Activated CD4-positive, alpha-beta T cell treated with anti-CD3 and anti-CD28 coated beads for 36 hours (primary cell): ENCODE measurements at regions of chr11 and their contacts with region 1.

Region 1: GRCh38 chr11:61091373-61092279 is 10.7 kb upstream of the CD5 start:
- DNase-seq: peak; percentile 84
- ATAC-seq: peak; percentile 71
- H3K4me3 Mint-ChIP-seq: peak overlapping the region; percentile 91
- H3K27ac Mint-ChIP-seq: peak overlapping the region; percentile 98
- H3K4me1 Mint-ChIP-seq: peaks cover 63% of the 10 kb centered on the region
- H3K27me3 Mint-ChIP-seq: no peaks in the 10 kb centered on the region

Region 2: GRCh38 chr11:61054927-61055562 is 36.6 kb before region 1 on chr11:
- CTCF ChIA-PET with region 1: interaction called, 3 read pairs
- POLR2A ChIA-PET with region 1: interaction called, 16 read pairs
- intact Hi-C with region 1: no loop called
- DNase-seq: peak; percentile 79
- ATAC-seq: peak; percentile 77
- H3K4me3 Mint-ChIP-seq: peak overlapping the region; percentile 42
- H3K27ac Mint-ChIP-seq: peak overlapping the region; percentile 92
- H3K4me1 Mint-ChIP-seq: peaks cover 87% of the 10 kb centered on the region
- H3K27me3 Mint-ChIP-seq: no peaks in the 10 kb centered on the region

Region 3: DNA sequence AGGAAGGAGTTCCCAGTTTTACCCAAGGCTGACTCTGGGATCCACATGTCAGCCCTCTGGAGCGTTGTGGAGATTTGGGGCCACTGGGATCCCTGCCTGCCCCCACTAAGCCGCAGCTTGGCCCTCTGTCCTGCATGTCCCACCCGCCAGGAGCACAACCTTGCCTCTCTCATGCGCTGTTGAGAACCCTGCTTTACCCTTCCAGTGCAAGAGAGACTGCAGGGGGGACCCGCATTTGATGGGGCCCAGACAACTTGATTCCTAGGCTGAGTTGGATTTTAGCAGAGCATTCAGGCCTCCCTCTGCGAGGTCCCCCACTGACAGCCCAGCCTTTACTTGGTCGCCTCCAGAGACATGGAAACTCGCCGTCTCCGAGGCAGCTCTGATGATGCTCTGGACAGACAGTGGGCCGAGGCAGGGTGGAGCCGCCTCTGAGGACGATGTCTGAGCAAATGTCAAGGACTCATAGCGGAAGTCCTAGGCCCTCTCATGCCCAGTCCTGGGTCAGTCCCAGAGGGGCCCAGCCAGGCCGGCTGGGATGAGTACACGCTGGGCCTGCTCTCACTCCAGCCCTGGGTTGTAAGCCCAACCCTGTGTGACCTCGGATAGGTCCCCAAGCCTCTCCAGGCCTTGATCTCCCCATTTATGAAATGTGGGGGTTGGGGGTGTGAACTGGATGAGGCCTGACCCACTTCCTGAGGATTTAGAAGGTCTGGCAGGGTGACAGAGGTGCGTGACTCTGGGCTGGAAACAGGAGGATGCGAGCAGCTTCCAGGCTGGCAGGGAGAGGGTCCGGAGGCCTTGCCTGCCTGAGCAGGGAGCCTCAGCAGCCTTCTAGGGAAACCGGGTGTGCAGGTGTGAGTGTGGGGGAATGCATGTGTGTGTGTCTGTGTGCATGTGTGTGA is 11.3 kb after region 1 on chr11:
- CTCF ChIA-PET with region 1: interaction called, 8 read pairs
- POLR2A ChIA-PET with region 1: interaction called, 8 read pairs
- intact Hi-C with region 1: loop called in 1 of 2 experiments (anchors 1 kb)
- DNase-seq: peak; percentile 49
- ATAC-seq: peak; percentile 16
- H3K4me3 Mint-ChIP-seq: no peak overlapping the region
- H3K27ac Mint-ChIP-seq: no peak overlapping the region
- H3K4me1 Mint-ChIP-seq: peaks cover 25% of the 10 kb centered on the region
- H3K27me3 Mint-ChIP-seq: no peaks in the 10 kb centered on the region